Dorsolateral prefrontal cortex (tissue), 120 donors: ENCODE measurements at regions of chr4 and their contacts with region 1.

Region 1: DNA sequence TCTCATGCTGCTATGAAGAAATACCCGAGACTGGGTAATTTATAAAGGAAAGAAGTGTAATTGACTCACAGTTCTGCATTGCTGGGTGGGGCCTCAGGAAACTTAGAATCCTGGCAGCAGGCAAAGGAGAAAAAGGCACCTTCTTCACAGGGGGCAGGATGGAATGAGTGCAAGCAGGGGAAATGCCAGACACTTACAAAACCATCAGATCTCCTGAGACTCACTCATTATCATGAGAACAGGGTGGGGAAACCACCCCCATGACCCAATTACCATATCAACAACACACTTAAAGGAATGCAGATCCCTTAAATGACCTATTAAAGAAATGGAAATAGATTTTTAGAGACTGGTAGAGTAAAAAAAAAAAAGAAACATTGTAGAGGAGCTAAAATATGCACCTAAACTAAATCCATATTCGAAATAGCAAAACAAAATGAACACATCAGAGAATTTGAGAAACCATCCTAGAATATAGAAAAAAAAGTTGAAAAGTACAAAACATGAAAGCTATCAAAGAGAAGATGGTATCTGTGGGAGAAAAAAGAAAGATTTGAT is 104.3 kb upstream of the UGT8 start:
- DNase-seq: no peak
- H3K4me3 ChIP-seq: no peak overlapping the region
- H3K27ac ChIP-seq: no peak overlapping the region
- H3K27me3 ChIP-seq: no peaks in the 10 kb centered on the region
- CTCF ChIP-seq: no peak

Region 2: GRCh38 chr4:114399105-114399504 is 95.2 kb before region 1 on chr4:
- intact Hi-C with region 1: loop called in 1 of 2 experiments (anchors 5 kb)
- DNase-seq: no peak
- H3K4me3 ChIP-seq: no peak overlapping the region
- H3K27ac ChIP-seq: no peak overlapping the region
- H3K27me3 ChIP-seq: peaks cover 0 to 7% (median 0%) of the 10 kb centered on the region in 45 donors
- CTCF ChIP-seq: no peak